Activated B cell treated with CpG ODN at 0.5 μM for 24 hours (primary cell): ENCODE measurements at regions of chr11 and their contacts with region 1.

Region 1: DNA sequence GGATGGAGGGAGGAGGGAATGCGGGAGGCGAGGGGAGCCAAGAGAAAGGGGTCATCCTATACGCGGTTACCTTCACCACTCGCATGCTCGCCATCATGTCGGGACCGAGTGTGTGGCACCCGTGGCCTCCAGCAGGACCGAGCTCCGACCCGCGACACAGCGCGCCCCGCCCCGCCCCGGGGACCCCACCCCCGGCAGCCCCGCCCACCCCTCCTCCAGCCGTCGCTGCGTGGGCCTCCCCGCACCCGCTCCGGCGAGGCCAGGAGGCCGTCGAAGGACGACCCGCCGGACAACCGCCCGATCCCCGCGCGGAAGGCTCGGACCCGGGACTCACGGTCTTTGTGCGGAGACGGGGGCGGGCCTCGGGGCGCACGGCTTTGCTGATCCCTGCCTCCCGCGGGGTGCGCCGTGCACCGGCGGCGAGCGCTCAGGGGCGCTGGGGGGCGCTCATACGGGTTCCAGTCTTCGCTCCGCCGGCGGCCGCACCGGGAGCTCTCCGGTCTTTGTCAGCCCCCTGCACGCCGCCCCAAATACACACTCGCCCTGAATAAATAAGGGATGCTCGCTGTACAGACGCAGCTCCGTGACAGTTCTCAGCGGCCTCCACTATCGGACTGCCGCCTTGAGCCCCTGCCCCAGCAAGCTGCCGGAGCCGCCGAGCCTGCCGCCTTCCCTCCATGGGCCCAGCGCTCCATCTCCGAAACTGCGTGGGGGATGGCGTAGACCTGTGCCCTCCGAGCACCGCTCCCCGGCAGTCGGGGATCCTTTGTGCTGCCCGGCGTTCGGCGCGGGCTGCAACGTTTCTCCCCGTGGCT is at the start of gene UBE2L6:
- DNase-seq: peak; percentile 80
- ATAC-seq: peak; percentile 70
- H3K4me3 Mint-ChIP-seq: peak within 1 kb of the TSS; percentile 99
- H3K27ac Mint-ChIP-seq: peak within 1 kb of the TSS; percentile 97
- H3K4me1 Mint-ChIP-seq: peaks cover 40% of the 10 kb centered on the region
- H3K27me3 Mint-ChIP-seq: no peaks in the 10 kb centered on the region
- CTCF ChIP-seq: peak; percentile 41
- total RNA-seq, gene UBE2L6: 63.4 and 69.2 TPM in 2 replicates

Region 2: GRCh38 chr11:57345555-57346211 is 222.0 kb before region 1 on chr11:
- CTCF ChIA-PET with region 1: no interaction called
- POLR2A ChIA-PET with region 1: no interaction called
- intact Hi-C with region 1: loop called (anchors 1 kb)
- DNase-seq: peak; percentile 40
- ATAC-seq: peak; percentile 91
- H3K4me3 Mint-ChIP-seq: no peak overlapping the region
- H3K27ac Mint-ChIP-seq: no peak overlapping the region
- H3K4me1 Mint-ChIP-seq: peaks cover 3% of the 10 kb centered on the region
- H3K27me3 Mint-ChIP-seq: peaks cover 3% of the 10 kb centered on the region
- CTCF ChIP-seq: no peak

Region 3: DNA sequence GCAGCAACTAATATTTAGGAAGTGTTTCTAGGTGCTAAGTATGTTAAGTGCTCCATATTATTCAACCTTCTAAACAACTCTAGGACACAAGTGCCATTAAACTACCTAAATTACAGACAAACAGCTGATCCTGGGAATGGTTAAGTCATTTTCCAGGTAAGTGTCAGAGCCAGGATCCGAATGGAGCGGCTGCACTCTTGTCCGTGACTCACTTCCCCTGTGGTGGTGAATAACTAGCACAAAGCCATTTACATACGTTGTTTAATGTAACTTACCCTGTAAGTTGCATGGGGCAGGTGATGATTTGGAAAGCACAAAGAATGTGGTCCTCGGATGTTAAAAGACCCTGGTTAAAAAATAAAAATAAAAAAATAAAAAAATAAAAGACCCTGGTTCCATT is 168.5 kb before region 1 on chr11:
- CTCF ChIA-PET with region 1: no interaction called
- POLR2A ChIA-PET with region 1: no interaction called
- intact Hi-C with region 1: no loop called
- DNase-seq: no peak
- ATAC-seq: no peak
- H3K4me3 Mint-ChIP-seq: no peak overlapping the region
- H3K27ac Mint-ChIP-seq: no peak overlapping the region
- H3K4me1 Mint-ChIP-seq: peaks cover 10% of the 10 kb centered on the region
- H3K27me3 Mint-ChIP-seq: no peaks in the 10 kb centered on the region
- CTCF ChIP-seq: no peak

Region 4: GRCh38 chr11:57480409-57481137 is 87.1 kb before region 1 on chr11:
- CTCF ChIA-PET with region 1: no interaction called
- POLR2A ChIA-PET with region 1: interaction called, 3 read pairs
- intact Hi-C with region 1: loop called (anchors 2 kb)
- DNase-seq: peak; percentile 47
- ATAC-seq: peak; percentile 29
- H3K4me3 Mint-ChIP-seq: no peak overlapping the region
- H3K27ac Mint-ChIP-seq: no peak overlapping the region
- H3K4me1 Mint-ChIP-seq: peaks cover 59% of the 10 kb centered on the region
- H3K27me3 Mint-ChIP-seq: peaks cover 7% of the 10 kb centered on the region
- CTCF ChIP-seq: no peak

Region 5: GRCh38 chr11:57632116-57632515 is 64.4 kb after region 1 on chr11:
- CTCF ChIA-PET with region 1: no interaction called
- POLR2A ChIA-PET with region 1: no interaction called
- intact Hi-C with region 1: no loop called
- DNase-seq: no peak
- ATAC-seq: no peak
- H3K4me3 Mint-ChIP-seq: no peak overlapping the region
- H3K27ac Mint-ChIP-seq: no peak overlapping the region
- H3K4me1 Mint-ChIP-seq: no peaks in the 10 kb centered on the region
- H3K27me3 Mint-ChIP-seq: peaks cover 40% of the 10 kb centered on the region
- CTCF ChIP-seq: no peak

Region 6: DNA sequence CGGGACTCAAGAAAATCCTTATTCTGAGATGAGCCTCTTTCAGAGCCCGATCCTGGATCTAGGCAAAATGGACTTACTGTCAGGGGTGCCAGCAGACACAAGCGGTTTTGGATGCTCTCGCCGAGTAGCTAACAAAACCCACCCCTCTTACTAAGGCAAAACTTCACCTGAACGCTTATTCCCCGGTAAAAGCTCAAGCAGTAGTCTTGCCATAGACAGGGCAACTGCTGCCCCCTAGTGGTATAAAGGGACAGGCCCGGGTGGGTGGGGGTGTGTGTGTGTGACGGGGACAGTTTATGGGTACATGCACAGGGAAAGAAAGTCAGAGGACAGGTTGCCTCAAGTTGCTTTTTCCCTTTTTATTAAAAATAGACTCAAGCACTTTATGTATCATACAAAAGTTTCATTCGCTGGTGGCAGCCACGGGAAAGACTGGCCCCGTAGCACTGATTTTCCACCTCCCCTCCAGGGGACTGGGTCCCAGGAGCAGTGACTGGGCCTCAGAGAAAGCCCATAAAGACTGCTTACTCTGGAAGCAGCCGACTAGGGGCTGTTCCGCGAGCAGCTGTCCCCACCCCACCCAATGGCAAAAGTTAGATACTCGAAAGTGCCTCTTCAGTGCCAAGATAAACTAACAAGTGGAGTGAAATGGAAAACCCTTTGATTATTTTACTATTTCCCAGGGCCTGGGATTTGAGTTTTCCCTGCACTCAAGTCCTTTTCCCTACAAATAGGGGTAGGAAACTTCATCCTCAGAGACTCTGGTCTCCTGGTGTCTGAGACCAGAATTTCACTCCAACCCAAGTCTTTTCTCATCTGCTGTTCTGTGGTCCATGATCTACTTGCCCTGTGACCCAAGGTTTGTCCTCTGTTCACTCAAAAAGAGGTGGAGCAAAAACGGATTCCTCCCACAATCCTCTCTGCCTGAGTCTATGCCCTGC is 77.3 kb after region 1 on chr11:
- CTCF ChIA-PET with region 1: interaction called, 61 read pairs
- POLR2A ChIA-PET with region 1: no interaction called
- intact Hi-C with region 1: loop called (anchors 1 kb)
- DNase-seq: peak; percentile 65
- ATAC-seq: peak; percentile 82
- H3K4me3 Mint-ChIP-seq: no peak overlapping the region
- H3K27ac Mint-ChIP-seq: no peak overlapping the region
- H3K4me1 Mint-ChIP-seq: peaks cover 40% of the 10 kb centered on the region
- H3K27me3 Mint-ChIP-seq: peaks cover 58% of the 10 kb centered on the region
- CTCF ChIP-seq: no peak

Region 7: GRCh38 chr11:57800444-57801182 is 232.9 kb after region 1 on chr11:
- CTCF ChIA-PET with region 1: interaction called, 28 read pairs
- POLR2A ChIA-PET with region 1: interaction called, 10 read pairs
- intact Hi-C with region 1: loop called (anchors 1 kb)
- DNase-seq: no peak
- ATAC-seq: peak; percentile 87
- H3K4me3 Mint-ChIP-seq: no peak overlapping the region
- H3K27ac Mint-ChIP-seq: peak overlapping the region; percentile 84
- H3K4me1 Mint-ChIP-seq: peaks cover 34% of the 10 kb centered on the region
- H3K27me3 Mint-ChIP-seq: no peaks in the 10 kb centered on the region
- CTCF ChIP-seq: peak; percentile 57

Region 8: DNA sequence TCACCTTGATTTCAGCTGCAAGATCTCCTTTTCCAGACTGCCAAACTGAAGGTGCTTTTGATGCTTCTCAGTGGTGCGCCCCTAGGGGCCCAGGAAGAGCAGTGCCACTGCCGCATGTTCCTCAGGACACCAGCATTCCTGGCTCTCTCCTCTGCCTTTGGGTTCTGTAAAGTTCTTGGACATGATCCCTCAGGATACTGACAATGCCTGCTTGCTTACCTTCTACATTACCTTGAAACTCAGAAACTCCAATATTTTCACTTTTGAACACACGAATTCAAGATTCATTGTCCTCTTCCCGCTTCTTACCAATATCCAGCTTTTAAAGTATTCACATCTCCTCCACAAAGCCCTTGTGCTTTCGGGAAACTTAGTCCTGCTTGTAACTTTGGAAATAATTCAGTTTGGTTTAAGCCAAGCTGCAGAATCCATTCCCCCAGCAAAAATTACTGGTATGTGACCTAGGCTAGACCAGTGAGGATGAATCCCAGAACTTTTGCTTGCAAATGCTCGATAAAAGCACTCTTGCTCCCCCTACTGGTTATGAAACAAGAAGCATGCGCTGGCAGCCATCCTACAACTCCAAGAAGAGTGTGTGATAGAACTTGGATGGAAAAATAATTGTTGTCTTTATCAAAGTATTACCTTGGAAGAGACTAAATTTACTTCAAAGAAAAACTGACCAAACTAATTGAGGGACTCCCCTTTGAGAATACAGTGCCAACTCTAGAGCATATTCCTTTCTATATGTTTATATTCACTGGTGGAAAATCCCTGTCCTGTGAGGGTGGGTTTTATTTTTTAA is 956.7 kb after region 1 on chr11:
- CTCF ChIA-PET with region 1: no interaction called
- POLR2A ChIA-PET with region 1: no interaction called
- intact Hi-C with region 1: loop called (anchors 5 kb)
- DNase-seq: no peak
- ATAC-seq: peak; percentile 18
- H3K4me3 Mint-ChIP-seq: peak overlapping the region; percentile 64
- H3K27ac Mint-ChIP-seq: peak overlapping the region; percentile 87
- H3K4me1 Mint-ChIP-seq: peaks cover 43% of the 10 kb centered on the region
- H3K27me3 Mint-ChIP-seq: no peaks in the 10 kb centered on the region
- CTCF ChIP-seq: no peak